ENCODE measurements at regions of chr14 and their contacts with region 1.

Region 1: GRCh38 chr14:102608064-102608446 is 15.6 kb downstream of the RCOR1 start:
- DNase-seq: no peak
- ATAC-seq: no peak
- H3K4me3 Mint-ChIP-seq: no peak overlapping the region
- H3K27ac Mint-ChIP-seq: peak overlapping the region; percentile 88
- H3K4me1 Mint-ChIP-seq: peaks cover 9% of the 10 kb centered on the region; the same call in 1 of the 2 replicates
- H3K27me3 Mint-ChIP-seq: no peaks in the 10 kb centered on the region
- CTCF ChIP-seq: no peak

Region 2: GRCh38 chr14:102591889-102592763 is 15.9 kb before region 1 on chr14 and contains the start of gene RCOR1:
- CTCF ChIA-PET with region 1: interaction called, 10 read pairs
- POLR2A ChIA-PET with region 1: no interaction called
- DNase-seq: peak; percentile 98
- ATAC-seq: peak; percentile 87
- H3K4me3 Mint-ChIP-seq: peak within 1 kb of the TSS; percentile 81
- H3K27ac Mint-ChIP-seq: peak within 1 kb of the TSS; percentile 95
- H3K4me1 Mint-ChIP-seq: peaks cover 41% of the 10 kb centered on the region
- H3K27me3 Mint-ChIP-seq: peaks cover 5% of the 10 kb centered on the region; the same call in 1 of the 2 replicates
- CTCF ChIP-seq: no peak
- total RNA-seq, gene RCOR1: 25.1 to 25.4 TPM (median 25.4 TPM) in 3 replicates